ENCODE measurements at regions of chr1 and their contacts with region 1.

Region 1: GRCh38 chr1:48498096-48498791 is 26.2 kb upstream of the SPATA6 start:
- DNase-seq: peak; percentile 43
- H3K4me3 ChIP-seq: no peak overlapping the region
- H3K27ac ChIP-seq: no peak overlapping the region
- H3K4me1 ChIP-seq: peaks cover 14% of the 10 kb centered on the region
- H3K27me3 ChIP-seq: no peaks in the 10 kb centered on the region
- CTCF ChIP-seq: peak; percentile 95 to 97

Region 2: DNA sequence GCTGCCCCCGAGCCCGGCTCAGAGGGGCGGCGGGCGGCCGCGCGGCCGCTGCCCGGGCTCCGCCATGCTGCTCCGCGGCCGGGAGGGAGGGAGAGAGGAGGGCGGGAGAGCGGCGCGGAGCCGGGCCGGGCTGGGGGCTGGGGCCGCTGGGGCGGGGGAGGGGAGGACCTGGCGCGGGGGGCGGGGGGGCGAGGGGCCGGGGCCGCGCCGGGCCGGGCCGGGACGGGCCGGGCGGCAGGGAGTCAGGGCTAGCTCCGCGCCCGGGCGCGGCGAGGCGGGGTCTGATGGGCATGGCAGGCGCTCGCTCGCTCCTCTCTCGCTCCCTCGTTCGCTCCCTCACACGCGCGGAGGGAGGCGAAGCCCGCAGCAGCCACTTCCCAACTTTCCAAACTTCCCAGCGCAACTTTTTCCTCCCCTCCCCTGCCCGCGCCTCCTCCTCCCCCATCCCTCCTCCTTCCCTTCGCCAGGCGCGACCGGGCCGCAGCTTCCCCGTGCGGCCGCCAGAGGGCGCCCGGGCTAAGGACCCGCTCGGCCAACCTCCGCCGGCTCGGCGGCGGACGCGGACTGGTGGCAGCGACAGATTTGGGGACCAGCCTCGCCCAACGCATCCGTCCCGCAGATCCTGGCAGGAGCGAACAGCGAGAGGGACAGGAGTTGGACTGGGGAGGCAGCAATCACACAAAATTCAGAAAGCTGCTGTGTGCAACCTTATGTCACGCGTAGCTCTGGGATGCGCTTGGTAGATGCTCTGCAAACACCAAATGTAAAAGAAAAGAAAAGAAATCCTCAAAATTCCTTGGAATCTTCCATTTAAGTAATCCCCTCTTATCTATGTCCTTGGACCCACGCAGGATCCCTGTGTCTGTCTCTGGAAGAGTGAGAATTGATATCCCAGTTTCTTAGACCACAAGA is 500.7 kb before region 1 on chr1 and contains the start of gene TRABD2B:
- CTCF ChIA-PET with region 1: no interaction called
- dilution Hi-C with region 1: no loop called
- in situ Hi-C with region 1: no loop called
- intact Hi-C with region 1: no loop called
- DNase-seq: peak; percentile 69
- H3K4me3 ChIP-seq: peak within 1 kb of the TSS; percentile 57 to 75 (median 69)
- H3K27ac ChIP-seq: no peak within 1 kb of the TSS
- H3K4me1 ChIP-seq: peaks cover 23% of the 10 kb centered on the region
- H3K27me3 ChIP-seq: no peaks in the 10 kb centered on the region
- CTCF ChIP-seq: peak; percentile 55 to 96
- total RNA-seq, gene TRABD2B: 1.2 TPM

Region 3: DNA sequence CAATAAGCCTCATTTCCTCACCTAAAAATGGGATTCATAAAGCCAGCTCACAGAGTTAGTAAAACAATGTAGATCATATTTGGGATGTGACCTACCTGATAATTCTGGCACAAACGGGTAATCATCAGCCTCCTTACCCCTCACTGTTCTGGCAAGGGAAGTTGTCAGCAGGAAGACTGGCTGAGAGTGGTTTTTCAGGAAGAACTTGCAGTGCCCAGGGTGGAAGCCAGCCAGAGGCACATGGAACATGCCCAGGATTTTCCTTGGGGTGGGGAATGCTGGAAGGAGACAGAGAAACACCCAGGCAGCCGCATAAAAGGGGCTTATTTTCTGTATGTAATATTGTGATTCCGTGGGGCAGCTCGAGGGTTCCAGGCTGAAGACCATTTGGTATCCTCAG is 283.4 kb before region 1 on chr1:
- CTCF ChIA-PET with region 1: no interaction called
- dilution Hi-C with region 1: no loop called
- in situ Hi-C with region 1: no loop called
- intact Hi-C with region 1: loop called (anchors 5 kb)
- DNase-seq: no peak
- H3K4me3 ChIP-seq: no peak overlapping the region
- H3K27ac ChIP-seq: no peak overlapping the region
- H3K4me1 ChIP-seq: no peaks in the 10 kb centered on the region
- H3K27me3 ChIP-seq: no peaks in the 10 kb centered on the region
- CTCF ChIP-seq: no peak

Region 4: GRCh38 chr1:48236716-48237470 is 261.4 kb before region 1 on chr1:
- CTCF ChIA-PET with region 1: no interaction called
- dilution Hi-C with region 1: no loop called
- in situ Hi-C with region 1: no loop called
- intact Hi-C with region 1: loop called (anchors 5 kb)
- DNase-seq: peak; percentile 34
- H3K4me3 ChIP-seq: no peak overlapping the region
- H3K27ac ChIP-seq: no peak overlapping the region
- H3K4me1 ChIP-seq: no peaks in the 10 kb centered on the region
- H3K27me3 ChIP-seq: no peaks in the 10 kb centered on the region
- CTCF ChIP-seq: peak; percentile 77 to 86

Region 5: DNA sequence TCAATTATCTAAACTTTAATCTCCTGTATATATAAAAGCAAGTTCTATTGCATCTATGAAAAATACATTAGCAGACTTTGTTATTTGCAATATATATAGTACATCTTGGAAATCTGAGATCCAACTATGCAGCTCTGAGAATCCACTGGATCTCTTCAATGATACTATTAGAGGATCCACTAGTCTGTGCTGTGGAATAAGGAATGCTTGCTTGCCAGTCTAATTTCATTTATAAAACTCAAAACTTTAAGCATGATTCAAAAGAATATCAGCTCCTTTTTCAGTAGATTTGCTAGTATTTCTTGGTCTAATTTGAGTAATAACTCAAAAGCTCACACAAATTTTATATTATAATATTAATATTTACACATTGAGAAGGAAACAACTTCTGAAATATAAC is 141.3 kb before region 1 on chr1:
- CTCF ChIA-PET with region 1: no interaction called
- dilution Hi-C with region 1: no loop called
- in situ Hi-C with region 1: no loop called
- intact Hi-C with region 1: loop called (anchors 1 kb)
- DNase-seq: no peak
- H3K4me3 ChIP-seq: no peak overlapping the region
- H3K27ac ChIP-seq: no peak overlapping the region
- H3K4me1 ChIP-seq: no peaks in the 10 kb centered on the region
- H3K27me3 ChIP-seq: no peaks in the 10 kb centered on the region
- CTCF ChIP-seq: no peak